ENCODE measurements at regions of chr16 and their contacts with region 1.

Region 1: DNA sequence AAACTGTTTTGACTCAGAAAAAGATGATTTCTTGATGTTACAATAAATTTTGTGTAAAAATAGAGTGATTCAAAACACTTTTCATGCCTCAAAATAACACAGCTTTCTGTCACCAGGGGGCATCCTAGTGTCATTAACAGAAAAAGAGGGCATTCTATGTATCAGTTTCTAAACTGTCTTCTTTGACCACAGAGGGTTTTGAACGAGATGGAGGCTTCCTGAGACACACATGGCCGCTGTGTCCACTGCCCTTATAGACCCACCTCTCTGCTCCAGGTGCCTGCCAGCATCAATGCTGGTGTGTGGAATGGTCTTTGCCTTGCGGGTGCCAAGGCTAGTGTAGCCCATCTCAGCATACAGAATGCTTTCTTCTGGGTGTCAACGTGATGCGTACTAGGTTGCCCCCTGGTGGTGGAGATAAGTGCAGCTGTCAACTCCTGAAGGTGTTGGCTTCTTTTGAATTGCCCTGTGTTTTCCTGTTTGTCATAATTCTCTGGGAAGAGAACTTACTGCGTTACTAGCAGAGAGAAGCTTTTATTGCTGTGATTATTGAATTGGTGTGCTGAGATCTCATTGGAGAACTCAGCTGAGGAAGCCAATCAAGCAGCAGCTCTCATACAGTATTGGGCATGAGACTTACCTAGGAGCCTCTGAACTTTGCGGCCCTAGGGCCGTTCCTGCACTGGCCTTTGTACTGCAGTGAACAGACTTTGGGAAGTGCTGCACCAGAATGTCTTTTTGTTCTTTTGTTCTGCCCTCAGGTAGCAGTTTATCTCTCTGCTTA is 38.6 kb downstream of the USP10 start:
- DNase-seq: peak; percentile 85
- ATAC-seq: peak; percentile 79
- H3K4me3 Mint-ChIP-seq: no peak overlapping the region
- H3K27ac Mint-ChIP-seq: peak overlapping the region; percentile 42
- H3K4me1 Mint-ChIP-seq: peaks cover 59% of the 10 kb centered on the region
- H3K27me3 Mint-ChIP-seq: no peaks in the 10 kb centered on the region

Region 2: DNA sequence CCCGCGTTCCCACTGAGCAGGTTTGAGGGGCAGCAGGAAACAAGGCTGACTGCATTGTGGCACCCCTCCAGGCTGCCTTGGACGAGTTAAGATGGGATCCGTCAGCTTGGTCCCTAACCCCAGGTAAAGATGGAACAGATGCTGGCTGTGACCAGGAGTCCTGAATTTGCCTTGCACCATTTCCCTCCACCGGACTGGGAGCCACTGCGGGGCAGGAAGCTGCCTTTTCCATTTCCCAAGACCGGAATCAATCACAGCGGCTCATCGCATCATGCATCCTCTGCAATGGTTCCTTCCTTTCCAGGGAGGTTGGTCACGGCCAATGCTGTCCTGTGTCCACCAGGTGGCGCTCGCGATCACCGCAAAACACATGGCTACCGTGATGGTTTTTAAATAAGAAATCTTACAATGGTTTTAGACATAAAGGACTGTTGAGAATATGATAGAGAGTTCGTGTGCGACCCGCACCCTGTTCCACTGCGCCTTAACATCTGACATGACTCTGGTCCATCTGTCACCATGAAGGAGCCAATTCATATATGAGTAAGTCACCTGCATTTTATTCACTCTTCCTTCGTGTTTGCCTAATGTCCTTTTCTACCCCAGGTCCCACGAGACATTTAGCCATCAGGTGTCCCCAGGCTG is 227.1 kb before region 1 on chr16:
- CTCF ChIA-PET with region 1: interaction called, 3 read pairs
- POLR2A ChIA-PET with region 1: no interaction called
- intact Hi-C with region 1: loop called in 1 of 2 experiments (anchors 1 kb)
- DNase-seq: peak; percentile 94
- ATAC-seq: peak; percentile 23
- H3K4me3 Mint-ChIP-seq: no peak overlapping the region
- H3K27ac Mint-ChIP-seq: peak overlapping the region; percentile 26
- H3K4me1 Mint-ChIP-seq: peaks cover 69% of the 10 kb centered on the region
- H3K27me3 Mint-ChIP-seq: no peaks in the 10 kb centered on the region

Region 3: GRCh38 chr16:84699712-84700445 is 38.6 kb before region 1 on chr16 and contains the start of gene USP10:
- CTCF ChIA-PET with region 1: interaction called, 25 read pairs
- POLR2A ChIA-PET with region 1: no interaction called
- intact Hi-C with region 1: loop called in 1 of 2 experiments (anchors 5 kb)
- DNase-seq: peak; percentile 90
- ATAC-seq: peak; percentile 83
- H3K4me3 Mint-ChIP-seq: peak within 1 kb of the TSS; percentile 89
- H3K27ac Mint-ChIP-seq: peak within 1 kb of the TSS; percentile 97
- H3K4me1 Mint-ChIP-seq: peaks cover 38% of the 10 kb centered on the region
- H3K27me3 Mint-ChIP-seq: no peaks in the 10 kb centered on the region
- total RNA-seq, gene USP10: 117 to 133 TPM

Region 4: DNA sequence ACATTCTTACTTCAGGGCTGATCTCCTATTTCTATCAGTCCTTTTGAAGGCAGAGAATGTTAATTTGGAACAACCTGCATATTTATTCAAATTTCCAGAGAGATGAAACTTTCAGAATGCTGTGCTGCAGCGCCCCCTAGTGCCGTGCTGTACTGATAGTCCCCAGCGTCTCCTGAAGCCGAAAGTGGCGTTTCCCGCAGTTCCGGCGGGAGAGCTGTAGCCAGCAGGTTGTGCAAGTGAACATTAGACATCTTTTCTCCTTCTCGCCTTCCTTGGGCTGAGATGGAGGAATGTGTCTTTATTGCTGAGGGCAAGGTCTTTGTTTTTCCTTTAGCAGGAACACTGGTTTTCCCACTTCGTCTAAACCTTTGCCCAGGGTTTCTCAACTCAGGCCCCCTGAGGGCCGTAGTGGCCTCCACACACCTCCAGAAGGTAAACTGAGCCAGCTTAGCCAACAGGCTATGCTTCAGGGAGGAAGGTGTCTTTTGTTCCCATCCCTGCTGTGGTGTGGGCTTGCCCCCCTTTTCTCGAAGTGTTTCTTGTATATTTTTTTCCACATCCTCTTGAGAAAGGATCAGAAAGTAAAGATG is 12.3 kb before region 1 on chr16:
- CTCF ChIA-PET with region 1: interaction called, 52 read pairs
- POLR2A ChIA-PET with region 1: no interaction called
- intact Hi-C with region 1: no loop called
- DNase-seq: peak; percentile 92
- ATAC-seq: peak; percentile 60
- H3K4me3 Mint-ChIP-seq: peak overlapping the region; percentile 48
- H3K27ac Mint-ChIP-seq: peak overlapping the region; percentile 58
- H3K4me1 Mint-ChIP-seq: peaks cover 83% of the 10 kb centered on the region
- H3K27me3 Mint-ChIP-seq: no peaks in the 10 kb centered on the region

Region 5: DNA sequence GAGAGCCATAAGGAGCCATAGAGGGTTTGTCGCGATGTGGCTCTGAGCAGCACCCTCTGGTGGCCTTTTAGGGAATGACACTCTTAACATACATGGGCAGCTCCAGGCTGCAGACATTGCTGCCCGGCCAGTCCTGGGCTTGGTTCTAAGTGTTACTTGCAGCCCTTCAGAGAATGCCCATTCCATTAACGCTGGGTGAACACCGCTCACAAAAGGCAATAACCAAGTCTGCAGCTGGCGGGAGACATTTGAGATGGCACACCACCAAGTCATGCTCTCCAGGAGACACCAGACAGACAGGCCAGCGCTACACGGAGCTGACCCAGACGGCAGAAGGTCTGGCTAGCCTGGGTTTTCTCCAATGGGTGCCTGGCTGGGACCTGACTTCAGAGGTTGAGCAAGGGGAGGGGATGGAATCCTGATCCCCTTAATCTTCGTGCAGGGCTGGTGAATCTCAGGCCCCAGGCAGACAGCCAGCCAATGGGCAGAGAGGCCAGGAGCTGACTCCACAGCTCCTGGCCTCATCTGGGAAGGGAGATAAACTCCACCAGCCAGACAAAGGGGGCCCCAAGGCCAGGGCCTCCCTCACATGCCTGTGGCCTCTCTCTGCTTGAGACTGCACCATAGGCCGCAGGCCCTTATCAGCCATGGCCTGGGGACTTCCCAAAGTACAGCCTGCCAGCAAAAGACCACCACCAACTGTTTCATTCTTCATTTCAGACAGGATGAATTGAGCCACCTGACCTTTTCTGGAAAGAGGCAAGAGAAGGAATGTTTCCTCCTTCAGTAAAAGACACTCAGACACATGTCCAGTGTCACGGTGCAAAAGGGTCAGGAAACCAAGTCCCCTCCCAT is 214.1 kb after region 1 on chr16:
- CTCF ChIA-PET with region 1: interaction called, 11 read pairs
- POLR2A ChIA-PET with region 1: no interaction called
- intact Hi-C with region 1: no loop called
- DNase-seq: peak; percentile 79
- ATAC-seq: peak; percentile 91
- H3K4me3 Mint-ChIP-seq: no peak overlapping the region
- H3K27ac Mint-ChIP-seq: no peak overlapping the region
- H3K4me1 Mint-ChIP-seq: no peaks in the 10 kb centered on the region
- H3K27me3 Mint-ChIP-seq: no peaks in the 10 kb centered on the region

Region 6: DNA sequence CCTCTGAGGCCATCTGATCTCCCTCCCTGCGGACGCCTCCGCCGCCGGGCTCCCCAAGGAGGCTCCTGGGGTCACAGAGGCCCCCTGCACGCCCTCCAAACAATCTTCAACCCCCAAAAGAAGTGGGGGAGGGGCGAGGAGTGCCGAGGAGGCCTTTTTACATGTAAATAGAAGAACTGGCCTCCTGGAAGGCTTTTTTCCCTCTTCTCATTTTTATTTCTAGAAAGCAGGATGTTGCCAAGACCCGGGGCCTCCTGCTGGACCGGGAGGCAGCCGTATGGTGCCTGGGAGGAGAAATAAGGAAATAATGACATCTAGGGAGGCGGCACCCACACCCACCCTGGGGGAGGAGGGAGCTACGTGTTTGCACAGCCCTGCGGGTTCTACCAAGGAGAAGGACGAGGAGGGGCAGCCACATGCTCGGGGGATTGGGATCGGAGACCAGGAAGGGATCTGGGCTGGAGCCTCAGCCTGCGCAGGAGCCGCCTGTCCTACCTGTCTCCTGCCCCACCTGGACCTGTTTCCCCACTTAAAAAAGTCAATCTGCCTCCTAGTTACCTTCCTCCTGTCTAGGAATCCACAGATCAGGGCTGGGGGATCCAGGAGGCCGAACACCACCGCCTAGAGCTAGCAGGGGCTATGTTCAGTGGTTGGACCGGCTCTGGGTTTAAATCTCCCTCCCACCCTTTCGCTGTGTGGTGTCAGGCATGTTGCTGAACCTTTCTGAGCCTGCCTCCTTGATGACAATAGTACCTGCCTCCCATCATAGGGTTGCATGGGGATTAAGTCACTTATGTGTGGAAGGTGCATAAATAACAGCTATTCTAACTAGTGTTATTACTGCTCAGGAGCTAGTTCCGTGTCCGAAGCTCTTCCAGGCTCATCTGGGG is 699.0 kb after region 1 on chr16:
- CTCF ChIA-PET with region 1: no interaction called
- POLR2A ChIA-PET with region 1: interaction called, 10 read pairs
- intact Hi-C with region 1: no loop called
- DNase-seq: no peak
- ATAC-seq: no peak
- H3K4me3 Mint-ChIP-seq: no peak overlapping the region
- H3K27ac Mint-ChIP-seq: no peak overlapping the region
- H3K4me1 Mint-ChIP-seq: no peaks in the 10 kb centered on the region
- H3K27me3 Mint-ChIP-seq: no peaks in the 10 kb centered on the region